ENCODE measurements at regions of chr16 and their contacts with region 1.

Region 1: DNA sequence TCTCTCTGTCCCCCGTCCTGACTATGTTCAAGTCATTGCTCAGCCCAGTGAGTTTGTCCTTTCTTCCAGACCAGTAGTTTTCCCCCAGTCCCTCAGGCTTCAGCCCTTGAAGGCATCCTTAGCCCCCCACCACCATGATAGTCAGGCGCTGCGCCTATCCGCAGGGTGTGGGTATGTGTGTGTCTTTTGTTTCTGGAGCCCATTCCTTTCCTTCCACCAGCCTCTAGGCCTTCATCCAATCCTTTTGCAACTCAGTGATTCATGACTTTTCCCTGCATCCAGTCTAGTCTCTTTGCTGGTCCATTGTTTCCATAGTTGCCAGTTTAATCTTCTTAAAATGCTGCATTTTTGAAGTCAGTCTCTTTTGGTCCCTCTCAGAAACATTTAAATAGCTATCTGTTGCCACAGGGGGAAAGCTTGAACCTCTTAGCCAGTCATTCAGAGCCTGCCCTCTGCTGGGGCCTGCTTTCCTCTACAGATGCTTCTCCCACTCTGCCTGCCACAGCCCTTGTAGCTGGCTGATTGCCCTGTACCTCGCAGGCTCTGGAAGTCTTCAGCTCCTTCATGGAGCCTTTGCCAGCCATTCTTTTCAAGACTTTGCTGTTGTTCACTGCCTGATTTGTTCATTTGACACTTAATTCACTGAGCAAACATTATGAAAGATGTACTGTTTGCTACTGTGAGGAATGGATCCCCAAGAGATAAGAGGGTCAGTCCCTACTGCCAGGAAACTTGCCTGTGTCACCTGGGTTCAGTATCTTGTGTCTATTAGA is 55.9 kb upstream of the ADCY7 start:
- H3K4me3 ChIP-seq: no peak overlapping the region
- H3K27ac ChIP-seq: no peak overlapping the region
- H3K4me1 ChIP-seq: peaks cover 19% of the 10 kb centered on the region
- CTCF ChIP-seq: peak; percentile 83

Region 2: DNA sequence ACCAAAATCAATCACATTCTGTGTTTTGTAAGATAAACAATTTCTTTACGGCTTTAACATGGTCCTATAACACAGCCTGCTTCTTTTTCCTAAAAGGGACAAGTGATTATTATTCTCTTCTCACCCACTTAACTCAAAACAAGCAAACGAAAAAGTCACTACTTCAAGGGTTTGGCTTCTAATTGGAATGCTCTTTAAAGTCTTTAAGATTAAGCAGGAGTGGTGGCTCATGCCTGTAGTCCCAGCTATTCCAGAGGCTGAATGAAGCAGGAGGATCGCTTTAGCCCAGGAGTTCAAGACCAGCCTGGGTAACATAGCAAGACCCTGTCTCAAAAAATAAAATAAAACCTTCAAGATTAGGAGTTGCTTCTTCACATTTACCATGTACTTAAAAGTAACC is 252.0 kb before region 1 on chr16:
- CTCF ChIA-PET with region 1: interaction called, 10 read pairs
- POLR2A ChIA-PET with region 1: no interaction called
- H3K4me3 ChIP-seq: no peak overlapping the region
- H3K27ac ChIP-seq: no peak overlapping the region
- H3K4me1 ChIP-seq: peaks cover 3% of the 10 kb centered on the region; the same call in 1 of the 2 replicates
- CTCF ChIP-seq: no peak

Region 3: DNA sequence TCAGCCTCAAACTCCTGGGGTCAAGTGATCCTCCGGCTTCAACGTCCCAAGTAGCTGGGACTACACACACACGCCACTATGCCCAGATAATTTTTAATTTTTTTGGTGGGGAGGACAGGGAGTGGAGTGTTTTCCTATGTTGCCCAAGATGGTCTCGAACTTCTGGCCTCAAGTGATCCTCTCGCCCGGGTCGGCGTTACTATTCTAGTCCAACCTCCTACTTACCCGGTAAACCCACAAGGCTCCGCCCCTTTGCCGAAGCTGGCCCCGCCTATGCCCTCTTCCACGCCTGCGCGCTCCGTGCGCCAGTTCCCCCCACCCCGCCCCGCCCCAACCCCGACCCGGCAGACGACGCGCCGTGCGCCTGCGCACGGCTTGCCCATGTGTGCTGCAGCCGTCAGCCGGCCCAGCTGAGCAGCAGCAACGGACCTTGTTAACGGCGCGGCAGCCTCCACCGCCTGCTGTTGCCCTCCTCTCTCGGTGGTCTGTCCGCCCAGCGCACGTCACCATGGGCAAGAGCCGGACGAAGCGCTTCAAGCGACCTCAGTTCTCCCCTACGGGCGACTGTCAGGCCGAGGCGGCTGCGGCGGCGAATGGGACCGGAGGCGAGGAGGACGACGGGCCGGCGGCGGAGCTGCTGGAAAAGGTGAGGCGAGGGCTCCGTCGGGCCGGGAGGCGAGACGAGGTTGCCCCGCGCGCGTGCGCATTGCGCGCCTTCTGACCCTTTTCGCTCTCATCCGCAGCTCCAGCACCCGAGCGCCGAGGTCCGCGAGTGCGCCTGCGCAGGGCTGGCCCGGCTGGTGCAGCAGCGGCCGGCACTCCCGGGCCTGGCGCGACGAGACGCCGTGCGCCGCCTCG is 144.6 kb before region 1 on chr16 and contains the start of gene HEATR3:
- CTCF ChIA-PET with region 1: interaction called, 70 read pairs
- POLR2A ChIA-PET with region 1: interaction called, 5 read pairs
- H3K4me3 ChIP-seq: peak within 1 kb of the TSS; percentile 98
- H3K27ac ChIP-seq: peak within 1 kb of the TSS; percentile 97
- H3K4me1 ChIP-seq: no peaks in the 10 kb centered on the region
- CTCF ChIP-seq: no peak

Region 4: GRCh38 chr16:50136399-50136798 is 74.1 kb before region 1 on chr16:
- CTCF ChIA-PET with region 1: interaction called, 27 read pairs
- POLR2A ChIA-PET with region 1: no interaction called
- H3K4me3 ChIP-seq: no peak overlapping the region
- H3K27ac ChIP-seq: no peak overlapping the region
- H3K4me1 ChIP-seq: no peaks in the 10 kb centered on the region
- CTCF ChIP-seq: no peak

Region 5: DNA sequence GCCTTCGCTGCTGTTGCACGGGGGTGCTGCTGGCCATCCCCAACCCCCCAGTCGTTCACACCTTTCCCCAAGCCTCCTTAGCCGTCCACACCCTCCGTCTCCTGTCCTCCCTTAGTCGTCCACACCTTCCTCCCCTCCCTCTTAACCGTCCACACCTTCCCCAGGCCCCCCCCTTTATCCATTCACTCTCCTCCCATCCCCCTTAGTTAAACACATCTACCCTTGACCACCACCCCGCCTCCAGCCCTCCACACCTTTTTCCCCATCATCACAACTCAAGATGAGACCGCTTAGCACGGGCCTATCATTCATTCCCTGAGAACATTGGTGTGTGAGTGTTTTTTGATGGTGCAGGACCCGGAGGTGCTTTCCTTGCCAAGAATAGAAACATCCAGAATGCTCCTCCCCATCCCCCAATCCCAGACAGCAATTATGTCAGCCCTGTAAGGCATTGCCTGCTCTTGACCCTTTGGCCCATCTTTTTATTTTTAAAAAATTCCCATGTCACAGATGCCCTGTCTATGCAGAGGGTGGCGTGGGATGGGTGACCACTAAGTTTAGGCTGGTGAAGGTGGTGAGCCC is 56.0 kb before region 1 on chr16:
- CTCF ChIA-PET with region 1: interaction called, 18 read pairs
- POLR2A ChIA-PET with region 1: no interaction called
- H3K4me3 ChIP-seq: peak overlapping the region; percentile 72
- H3K27ac ChIP-seq: peak overlapping the region; percentile 80; the same call in 1 of the 2 replicates
- H3K4me1 ChIP-seq: peaks cover 3% of the 10 kb centered on the region; the same call in 1 of the 2 replicates
- CTCF ChIP-seq: no peak

Region 6: GRCh38 chr16:50273681-50274325 is 63.4 kb after region 1 on chr16:
- CTCF ChIA-PET with region 1: no interaction called
- POLR2A ChIA-PET with region 1: no interaction called
- H3K4me3 ChIP-seq: no peak overlapping the region
- H3K27ac ChIP-seq: no peak overlapping the region
- H3K4me1 ChIP-seq: no peaks in the 10 kb centered on the region
- CTCF ChIP-seq: no peak

Region 7: GRCh38 chr16:50360033-50360778 is 149.8 kb after region 1 on chr16:
- CTCF ChIA-PET with region 1: interaction called, 12 read pairs
- POLR2A ChIA-PET with region 1: no interaction called
- H3K4me3 ChIP-seq: no peak overlapping the region
- H3K27ac ChIP-seq: no peak overlapping the region
- H3K4me1 ChIP-seq: no peaks in the 10 kb centered on the region
- CTCF ChIP-seq: no peak

Region 8: DNA sequence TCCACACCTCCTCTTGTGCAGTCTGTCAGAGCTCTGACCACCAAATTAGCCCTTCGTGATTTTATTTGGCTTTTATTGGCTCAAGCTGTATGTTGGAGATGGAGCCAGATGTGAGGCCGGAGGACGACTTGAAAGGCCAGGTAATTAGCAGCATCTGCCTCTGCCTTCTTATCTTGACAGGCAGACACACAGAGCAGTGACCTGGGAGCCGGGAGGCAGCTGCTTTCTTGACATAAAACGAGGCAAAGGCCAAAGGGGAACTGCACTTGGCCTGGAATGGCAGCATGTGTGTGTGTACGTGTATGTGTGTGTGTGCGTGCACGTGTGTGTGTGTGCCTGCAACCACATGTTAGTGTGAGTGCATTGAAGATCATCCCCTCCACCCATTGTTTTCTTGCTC is 215.2 kb after region 1 on chr16:
- CTCF ChIA-PET with region 1: no interaction called
- POLR2A ChIA-PET with region 1: no interaction called
- H3K4me3 ChIP-seq: no peak overlapping the region
- H3K27ac ChIP-seq: no peak overlapping the region
- H3K4me1 ChIP-seq: no peaks in the 10 kb centered on the region
- CTCF ChIP-seq: no peak

Region 9: GRCh38 chr16:50497592-50497991 is 287.1 kb after region 1 on chr16:
- CTCF ChIA-PET with region 1: no interaction called
- POLR2A ChIA-PET with region 1: no interaction called
- H3K4me3 ChIP-seq: no peak overlapping the region
- H3K27ac ChIP-seq: no peak overlapping the region
- H3K4me1 ChIP-seq: no peaks in the 10 kb centered on the region
- CTCF ChIP-seq: no peak

Measured in HEK293 (cell line).